BJ (cell line): ENCODE measurements at regions of chr20 and their contacts with region 1.

Region 1: GRCh38 chr20:53611449-53611894 is 17.8 kb upstream of the ZNF217 start:
- DNase-seq: peak; percentile 98
- H3K4me3 ChIP-seq: no peak overlapping the region
- H3K27me3 ChIP-seq: no peaks in the 10 kb centered on the region
- CTCF ChIP-seq: no peak

Region 2: DNA sequence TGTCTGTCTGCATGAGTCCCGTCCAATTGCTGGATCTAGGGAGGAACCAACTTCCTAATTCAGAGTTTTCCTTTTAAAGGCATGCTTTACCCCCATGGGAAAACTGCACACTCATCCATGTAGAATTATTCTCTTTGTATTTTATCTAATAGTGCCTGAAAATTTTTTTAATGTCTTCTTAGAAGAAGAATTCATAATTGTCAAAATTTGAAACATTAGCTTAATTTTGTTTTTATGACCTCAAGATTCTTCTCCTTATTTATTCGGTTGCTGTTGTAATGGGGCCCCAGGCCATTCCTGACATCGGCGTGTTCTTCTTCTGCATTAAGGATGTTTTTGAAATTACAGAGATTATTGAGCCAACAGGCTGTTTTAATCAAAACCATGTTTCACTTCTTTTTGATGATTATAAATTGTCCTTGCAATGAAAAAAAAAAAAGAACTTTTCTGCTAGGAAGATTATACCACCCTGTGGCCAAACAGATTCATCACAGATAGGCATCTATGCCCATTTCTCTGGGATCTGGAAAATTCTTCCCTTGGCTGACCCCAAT is 118.1 kb before region 1 on chr20:
- CTCF ChIA-PET with region 1: no interaction called
- POLR2A ChIA-PET with region 1: no interaction called
- DNase-seq: peak; percentile 4
- H3K4me3 ChIP-seq: no peak overlapping the region
- H3K27me3 ChIP-seq: no peaks in the 10 kb centered on the region
- CTCF ChIP-seq: no peak

Region 3: DNA sequence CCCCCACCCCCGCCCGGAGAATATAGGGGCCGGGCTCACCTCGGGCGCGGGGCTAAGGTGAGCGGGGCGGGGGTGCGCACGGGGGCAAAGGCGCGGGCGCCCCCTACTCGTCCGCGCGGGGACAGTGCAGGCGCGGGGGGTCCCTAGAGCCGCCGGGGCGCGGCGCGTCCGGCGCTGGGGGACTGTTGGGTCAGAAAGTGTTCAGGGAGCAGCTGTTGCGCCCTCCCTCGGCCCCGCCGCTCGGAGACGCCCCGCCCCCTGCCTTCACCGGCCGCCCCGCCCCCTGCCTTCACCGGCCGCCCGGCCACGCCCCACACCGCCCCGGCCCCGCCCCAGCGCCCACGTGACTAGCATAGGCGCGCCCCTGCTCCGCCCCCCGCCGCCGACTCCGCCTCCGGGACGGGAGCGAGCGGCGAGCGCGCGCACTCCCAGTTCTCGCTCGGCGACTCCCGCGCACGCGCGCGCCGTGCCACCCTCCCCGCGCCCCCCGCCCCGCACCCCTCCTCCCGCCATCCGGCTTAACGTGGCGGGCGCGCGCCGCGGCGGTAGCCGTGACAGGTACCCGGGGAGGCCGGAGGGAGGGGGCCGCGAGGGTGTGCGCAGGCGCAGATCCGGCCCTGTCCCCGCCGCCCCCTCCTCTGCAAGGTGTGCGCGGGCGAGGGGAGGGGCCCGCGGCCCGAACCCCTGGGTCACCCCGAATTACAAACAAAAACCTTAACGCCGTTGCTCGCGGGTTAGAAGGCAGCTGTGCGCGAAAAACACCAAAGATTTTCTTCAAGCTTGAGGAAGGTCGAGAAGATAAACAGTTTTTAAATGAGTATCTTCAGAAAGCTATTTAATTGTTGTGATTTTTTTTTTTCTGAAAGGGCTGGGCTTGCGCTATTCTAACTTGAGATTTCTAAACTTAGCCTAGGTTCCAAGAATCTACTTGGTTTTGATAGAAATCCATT is 17.1 kb before region 1 on chr20:
- CTCF ChIA-PET with region 1: no interaction called
- POLR2A ChIA-PET with region 1: interaction called, 12 read pairs
- DNase-seq: no peak
- H3K4me3 ChIP-seq: peak overlapping the region; percentile 83
- H3K27me3 ChIP-seq: no peaks in the 10 kb centered on the region
- CTCF ChIP-seq: peak; percentile 7; the same call in 1 of the 2 replicates

Region 4: GRCh38 chr20:53622247-53623133 is 11.0 kb after region 1 on chr20:
- CTCF ChIA-PET with region 1: interaction called, 3 read pairs
- POLR2A ChIA-PET with region 1: interaction called, 18 read pairs
- DNase-seq: no peak
- H3K4me3 ChIP-seq: no peak overlapping the region
- H3K27me3 ChIP-seq: no peaks in the 10 kb centered on the region
- CTCF ChIP-seq: no peak